Dendritic cell treated with granulocyte-macrophage colony-stimulating factor and Interleukin-4, amounts not matched to agents 40 ng/mL and 50 ng/mL, for 4 days (primary cell): ENCODE measurements at regions of chr12 and their contacts with region 1.

Region 1: DNA sequence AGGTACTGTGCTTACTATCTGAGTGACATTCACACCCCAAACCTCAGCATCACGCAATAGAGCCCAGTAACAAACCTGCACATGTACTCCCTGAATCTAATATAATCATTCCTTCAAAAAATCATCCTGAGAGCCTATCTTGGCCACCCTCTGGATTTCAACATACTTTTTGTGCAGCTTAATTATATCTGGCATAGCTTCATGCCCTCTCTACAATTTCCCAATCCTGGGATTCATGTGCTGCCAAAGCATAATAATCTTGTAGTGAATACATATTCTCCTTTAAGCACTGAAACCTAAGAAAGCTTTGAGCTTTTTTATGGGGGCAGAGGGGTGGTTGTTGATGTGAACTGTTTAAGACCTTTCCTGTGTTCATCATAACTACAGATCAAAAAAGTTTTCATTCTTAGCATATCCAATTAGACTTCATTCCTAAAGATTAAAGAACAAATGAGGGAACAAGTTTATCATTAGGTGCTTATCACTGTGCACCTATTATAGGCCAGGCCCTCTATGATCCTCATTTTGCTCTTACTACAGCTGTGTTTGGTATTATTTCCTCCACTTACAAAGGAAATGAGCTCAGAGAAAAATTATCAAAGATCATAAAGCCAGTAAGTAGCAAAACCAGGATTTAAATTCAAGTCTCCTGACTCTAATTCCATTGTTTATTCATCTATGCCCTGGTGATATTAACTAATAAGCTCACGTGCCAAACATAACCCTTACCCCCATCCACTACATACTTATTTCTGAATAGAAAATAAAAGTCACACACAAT is 51.2 kb downstream of the SINHCAF start:
- H3K4me3 Mint-ChIP-seq: no peak overlapping the region
- H3K27ac Mint-ChIP-seq: no peak overlapping the region
- H3K4me1 Mint-ChIP-seq: no peaks in the 10 kb centered on the region
- H3K27me3 Mint-ChIP-seq: no peaks in the 10 kb centered on the region

Region 2: GRCh38 chr12:31117203-31118011 is 157.3 kb before region 1 on chr12:
- intact Hi-C with region 1: loop called (anchors 10 kb)
- H3K4me3 Mint-ChIP-seq: peak overlapping the region; percentile 66
- H3K27ac Mint-ChIP-seq: no peak overlapping the region
- H3K4me1 Mint-ChIP-seq: peaks cover 5% of the 10 kb centered on the region
- H3K27me3 Mint-ChIP-seq: peaks cover 40% of the 10 kb centered on the region

Region 3: GRCh38 chr12:31238764-31239387 is 35.8 kb before region 1 on chr12:
- intact Hi-C with region 1: no loop called
- H3K4me3 Mint-ChIP-seq: no peak overlapping the region
- H3K27ac Mint-ChIP-seq: no peak overlapping the region
- H3K4me1 Mint-ChIP-seq: no peaks in the 10 kb centered on the region
- H3K27me3 Mint-ChIP-seq: peaks cover 13% of the 10 kb centered on the region